WTC11 (cell line): ENCODE measurements at regions of chr6 and their contacts with region 1.

Region 1: DNA sequence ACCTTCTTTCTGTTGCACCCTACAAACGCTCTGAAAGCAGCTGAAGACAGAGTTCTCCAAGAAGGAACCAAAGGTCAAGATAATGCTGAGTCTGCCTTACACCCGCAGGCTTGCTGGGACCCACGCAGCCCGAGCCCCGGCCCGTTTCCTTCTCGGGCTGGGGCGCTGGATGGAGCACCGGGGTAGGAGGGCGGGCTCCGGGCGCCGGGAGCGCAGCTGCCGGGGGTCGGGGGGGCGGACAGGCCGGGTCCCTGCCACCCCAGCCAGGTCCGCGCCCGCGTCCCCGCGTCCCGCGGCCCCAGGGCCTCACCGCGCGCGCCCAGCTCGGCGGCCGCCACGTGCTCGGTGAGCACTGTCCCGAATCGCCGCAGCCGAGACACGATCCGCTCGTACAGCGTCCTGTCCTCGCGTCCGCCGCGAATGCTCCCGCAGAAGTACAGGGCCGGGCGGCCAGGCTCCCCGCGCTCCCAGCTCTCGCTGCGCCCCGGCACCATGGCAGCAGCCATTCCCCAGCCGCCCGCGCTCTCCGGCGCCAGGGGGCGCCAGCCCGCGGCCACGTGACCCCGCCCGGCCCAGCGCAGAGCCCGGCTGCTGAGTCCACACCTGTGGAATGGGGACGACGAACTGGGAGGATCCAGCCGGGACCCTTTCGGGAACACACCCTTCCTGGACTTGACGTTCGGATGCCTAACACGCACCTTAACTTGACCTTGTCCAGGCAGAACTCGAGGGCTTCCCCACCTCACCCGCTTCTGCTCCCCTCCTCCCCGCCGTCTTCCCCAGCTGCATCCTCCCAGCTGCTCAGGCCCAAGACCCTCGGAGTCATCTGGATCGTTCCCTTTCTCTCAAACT is at the start of gene DNPH1:
- DNase-seq: peak; percentile 87
- ATAC-seq: peak; percentile 94
- H3K4me3 Mint-ChIP-seq: peak within 1 kb of the TSS; percentile 75
- H3K27ac Mint-ChIP-seq: no peak within 1 kb of the TSS
- H3K4me1 Mint-ChIP-seq: peaks cover 8% of the 10 kb centered on the region
- H3K27me3 Mint-ChIP-seq: peaks cover 42% of the 10 kb centered on the region
- CTCF ChIP-seq: peak; percentile 83
- total RNA-seq, gene DNPH1: 48.4 to 56.4 TPM (median 55.4 TPM) in 3 replicates

Region 2: DNA sequence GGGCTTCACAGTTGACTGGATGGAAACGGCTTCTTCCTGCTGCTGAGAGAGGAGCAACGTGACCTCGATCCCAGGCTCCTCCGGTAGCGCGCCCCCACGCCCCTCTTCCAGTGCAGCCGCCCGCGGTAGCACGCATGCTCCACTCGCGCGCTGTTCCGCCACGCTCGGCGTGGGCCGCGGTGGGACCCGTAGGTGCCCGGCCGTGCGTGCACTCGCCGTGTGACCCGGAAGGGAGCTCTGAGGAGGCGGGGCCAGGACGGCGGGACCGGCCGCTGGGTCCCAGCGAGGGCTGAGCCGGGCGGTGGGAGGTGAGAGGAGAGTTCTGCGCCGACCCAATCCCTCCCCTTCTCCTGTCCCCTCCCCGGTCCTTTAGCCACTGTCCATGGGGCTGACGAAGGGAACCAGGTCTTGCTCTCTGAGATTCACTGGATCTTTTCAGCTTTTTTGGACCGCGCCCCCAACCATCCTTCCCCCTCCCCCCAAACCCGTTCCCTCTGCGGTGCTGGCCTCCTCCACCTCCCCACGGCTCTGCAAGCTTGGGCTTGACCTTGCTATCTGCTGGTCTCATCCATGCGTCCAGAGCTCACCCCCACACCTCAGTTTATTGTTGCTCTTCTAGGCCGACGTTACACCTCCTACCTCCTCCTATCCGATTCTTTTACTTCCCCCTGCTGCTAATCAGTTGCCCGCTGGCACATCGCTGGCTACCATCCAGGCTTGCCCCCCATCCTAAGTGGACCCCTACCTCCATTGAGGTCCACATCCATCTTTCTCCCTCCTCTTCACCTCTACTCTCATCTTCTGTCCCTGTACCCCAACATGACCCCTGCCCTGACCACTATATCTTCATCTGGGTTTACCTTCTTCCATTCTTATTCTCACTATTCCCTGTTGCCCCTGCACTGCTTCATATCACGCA is 47.0 kb before region 1 on chr6 and contains the start of gene CUL9:
- CTCF ChIA-PET with region 1: interaction called, 11 read pairs
- POLR2A ChIA-PET with region 1: interaction called, 5 read pairs
- DNase-seq: peak; percentile 77
- ATAC-seq: peak; percentile 79
- H3K4me3 Mint-ChIP-seq: peak within 1 kb of the TSS; percentile 89
- H3K27ac Mint-ChIP-seq: peak within 1 kb of the TSS; percentile 95
- H3K4me1 Mint-ChIP-seq: peaks cover 20% of the 10 kb centered on the region
- H3K27me3 Mint-ChIP-seq: no peaks in the 10 kb centered on the region; the same call in 1 of the 2 replicates
- CTCF ChIP-seq: no peak
- total RNA-seq, gene CUL9: 15.2 to 20.5 TPM (median 19.2 TPM) in 3 replicates

Region 3: GRCh38 chr6:43247113-43247999 is 18.2 kb after region 1 on chr6:
- CTCF ChIA-PET with region 1: interaction called, 47 read pairs
- POLR2A ChIA-PET with region 1: interaction called, 9 read pairs
- DNase-seq: peak; percentile 93
- ATAC-seq: peak; percentile 87
- H3K4me3 Mint-ChIP-seq: peak overlapping the region; percentile 92
- H3K27ac Mint-ChIP-seq: peak overlapping the region; percentile 97; the same call in 1 of the 2 replicates
- H3K4me1 Mint-ChIP-seq: peaks cover 27% of the 10 kb centered on the region
- H3K27me3 Mint-ChIP-seq: peaks cover 23% of the 10 kb centered on the region
- CTCF ChIP-seq: no peak

Region 4: DNA sequence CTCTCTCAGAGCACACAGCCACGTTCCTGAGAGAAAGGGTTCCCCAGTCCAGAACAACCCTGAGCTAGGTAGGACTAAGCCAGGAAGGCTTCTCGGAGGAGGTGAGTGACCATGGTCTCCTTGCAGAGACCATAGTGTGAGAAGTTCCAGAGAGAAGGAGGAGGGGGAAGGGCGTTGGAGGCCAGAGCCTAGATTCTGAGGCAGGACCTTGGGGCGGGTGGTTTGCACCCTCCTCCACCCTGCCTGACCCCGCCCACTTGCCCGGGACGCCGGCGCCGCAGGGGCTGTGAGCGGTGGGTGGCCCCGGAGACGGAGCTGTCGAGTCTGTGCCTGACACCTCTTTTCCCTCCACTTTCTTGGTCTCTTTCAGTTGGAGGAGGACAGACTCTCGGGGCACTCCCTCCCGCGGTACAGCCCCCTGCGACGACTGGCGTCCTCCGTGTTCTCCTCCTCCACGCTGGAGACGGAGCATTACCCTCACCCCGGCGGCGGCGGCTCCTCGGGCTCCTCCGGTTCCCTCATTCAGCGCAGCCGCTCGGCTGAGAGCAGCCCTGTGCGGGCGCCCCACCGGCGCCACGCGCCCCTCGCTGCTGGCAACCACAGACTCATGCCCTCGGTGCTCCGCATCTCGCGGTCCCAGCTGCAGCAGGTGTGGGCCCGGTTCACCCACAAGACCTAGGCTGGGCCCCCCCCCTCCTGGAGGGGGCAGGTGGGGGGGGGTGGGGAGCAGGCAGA is 40.3 kb after region 1 on chr6:
- CTCF ChIA-PET with region 1: interaction called, 16 read pairs
- POLR2A ChIA-PET with region 1: interaction called, 3 read pairs
- DNase-seq: peak; percentile 50
- ATAC-seq: peak; percentile 43
- H3K4me3 Mint-ChIP-seq: peak overlapping the region; percentile 59
- H3K27ac Mint-ChIP-seq: no peak overlapping the region
- H3K4me1 Mint-ChIP-seq: peaks cover 38% of the 10 kb centered on the region
- H3K27me3 Mint-ChIP-seq: peaks cover 67% of the 10 kb centered on the region
- CTCF ChIP-seq: no peak

Region 5: GRCh38 chr6:43308101-43308989 is 79.2 kb after region 1 on chr6 and contains the start of gene CRIP3:
- CTCF ChIA-PET with region 1: interaction called, 22 read pairs
- POLR2A ChIA-PET with region 1: no interaction called
- DNase-seq: peak; percentile 90
- ATAC-seq: peak; percentile 98
- H3K4me3 Mint-ChIP-seq: peak within 1 kb of the TSS; percentile 84
- H3K27ac Mint-ChIP-seq: peak within 1 kb of the TSS; percentile 84; the same call in 1 of the 2 replicates
- H3K4me1 Mint-ChIP-seq: peaks cover 27% of the 10 kb centered on the region
- H3K27me3 Mint-ChIP-seq: 0 out of 2 replicates have a peak, but pooled peaks cover 4% of the 10 kb centered on the region
- CTCF ChIP-seq: no peak
- total RNA-seq, gene CRIP3: 44.7 to 48.9 TPM (median 45.6 TPM) in 3 replicates

Region 6: DNA sequence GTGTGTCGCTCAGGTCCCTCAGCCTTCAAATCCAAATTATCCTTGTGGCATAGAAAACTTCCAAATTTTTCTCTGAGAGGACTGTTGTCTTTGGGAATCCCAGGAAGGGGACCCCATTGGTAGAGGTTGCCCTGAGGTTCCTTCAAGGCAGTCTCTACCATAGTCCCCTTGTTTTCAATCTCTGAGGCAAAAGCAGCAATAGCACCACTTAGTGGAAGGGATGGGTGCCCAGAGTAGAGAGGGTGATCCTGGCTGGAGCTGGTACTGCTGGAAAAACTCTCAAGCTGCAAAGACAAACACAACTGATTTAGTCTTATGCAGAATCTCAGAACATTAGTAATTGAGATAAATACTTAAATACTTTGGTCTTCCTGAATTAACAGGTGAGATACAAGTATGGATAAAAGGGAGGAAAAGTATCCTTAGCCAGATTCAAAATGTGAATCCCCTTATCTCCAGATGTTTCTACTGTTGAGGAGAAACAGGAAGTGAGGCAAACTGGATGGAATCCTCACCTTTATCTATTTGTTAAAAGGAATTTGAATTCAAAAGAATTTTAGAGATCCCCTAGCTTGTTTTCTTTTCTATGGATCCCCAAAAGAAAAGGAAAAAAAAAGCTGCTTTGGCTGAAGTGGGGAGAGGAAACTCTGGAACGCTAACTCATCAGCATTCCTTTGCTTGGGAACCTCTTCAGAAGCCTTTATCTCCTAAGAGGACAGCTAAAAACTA is 126.8 kb after region 1 on chr6:
- CTCF ChIA-PET with region 1: interaction called, 13 read pairs
- POLR2A ChIA-PET with region 1: no interaction called
- DNase-seq: peak; percentile 22
- ATAC-seq: peak; percentile 99
- H3K4me3 Mint-ChIP-seq: no peak overlapping the region
- H3K27ac Mint-ChIP-seq: peak overlapping the region; percentile 24
- H3K4me1 Mint-ChIP-seq: peaks cover 23% of the 10 kb centered on the region
- H3K27me3 Mint-ChIP-seq: no peaks in the 10 kb centered on the region
- CTCF ChIP-seq: no peak

Region 7: GRCh38 chr6:43506667-43507471 is 277.7 kb after region 1 on chr6:
- CTCF ChIA-PET with region 1: interaction called, 10 read pairs
- POLR2A ChIA-PET with region 1: no interaction called
- DNase-seq: peak; percentile 81
- ATAC-seq: peak; percentile 63
- H3K4me3 Mint-ChIP-seq: no peak overlapping the region
- H3K27ac Mint-ChIP-seq: no peak overlapping the region
- H3K4me1 Mint-ChIP-seq: peaks cover 17% of the 10 kb centered on the region
- H3K27me3 Mint-ChIP-seq: peaks cover 28% of the 10 kb centered on the region
- CTCF ChIP-seq: peak; percentile 97

Region 8: GRCh38 chr6:43644931-43645612 is 415.9 kb after region 1 on chr6 and contains the start of gene RSPH9:
- CTCF ChIA-PET with region 1: no interaction called
- POLR2A ChIA-PET with region 1: no interaction called
- DNase-seq: peak; percentile 99
- ATAC-seq: peak; percentile 94
- H3K4me3 Mint-ChIP-seq: peak within 1 kb of the TSS; percentile 76
- H3K27ac Mint-ChIP-seq: peak within 1 kb of the TSS; percentile 99
- H3K4me1 Mint-ChIP-seq: peaks cover 15% of the 10 kb centered on the region
- H3K27me3 Mint-ChIP-seq: peaks cover 3% of the 10 kb centered on the region; the same call in 1 of the 2 replicates
- CTCF ChIP-seq: no peak
- total RNA-seq, gene RSPH9: 0.16 to 0.35 TPM (median 0.32 TPM) in 3 replicates